Mammary epithelial cell (primary cell): ENCODE measurements at regions of chr12 and their contacts with region 1.

Region 1: DNA sequence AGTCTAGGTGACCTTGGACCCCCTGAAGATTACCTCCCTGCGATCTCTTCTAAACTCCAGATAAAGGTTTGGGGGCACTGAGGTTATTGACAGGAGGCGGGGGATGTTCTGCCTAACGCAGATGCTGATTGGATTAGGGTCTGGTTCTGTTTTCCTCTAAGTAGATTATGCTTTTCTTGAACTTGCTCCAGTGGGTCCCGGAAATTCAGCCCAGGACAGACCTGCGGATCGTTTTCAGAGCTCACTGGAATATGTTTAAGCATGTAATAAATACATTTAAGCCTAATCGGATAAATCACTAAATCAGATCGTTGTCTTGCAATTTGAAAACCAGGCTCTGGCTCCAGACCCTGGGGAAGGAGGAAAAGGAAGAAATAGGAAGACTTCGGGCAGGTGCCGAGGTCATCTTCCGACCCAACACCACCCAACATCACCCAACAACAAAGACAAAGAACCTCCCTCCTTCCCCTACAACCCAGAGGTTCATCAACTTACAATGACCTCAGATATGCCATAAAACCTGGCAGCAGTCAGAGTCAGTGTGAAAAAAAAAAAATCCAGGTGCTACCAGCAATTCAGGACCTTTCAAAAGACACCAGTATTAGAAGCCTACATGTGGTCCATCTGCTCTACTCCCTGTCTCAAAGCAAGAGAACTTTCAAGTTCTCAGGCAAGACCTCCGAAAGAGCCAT is 148.4 kb downstream of the KSR2 start:
- DNase-seq: no peak
- H3K4me3 ChIP-seq: no peak overlapping the region
- H3K27ac ChIP-seq: no peak overlapping the region
- H3K4me1 ChIP-seq: no peaks in the 10 kb centered on the region
- H3K27me3 ChIP-seq: no peaks in the 10 kb centered on the region
- CTCF ChIP-seq: no peak

Region 2: DNA sequence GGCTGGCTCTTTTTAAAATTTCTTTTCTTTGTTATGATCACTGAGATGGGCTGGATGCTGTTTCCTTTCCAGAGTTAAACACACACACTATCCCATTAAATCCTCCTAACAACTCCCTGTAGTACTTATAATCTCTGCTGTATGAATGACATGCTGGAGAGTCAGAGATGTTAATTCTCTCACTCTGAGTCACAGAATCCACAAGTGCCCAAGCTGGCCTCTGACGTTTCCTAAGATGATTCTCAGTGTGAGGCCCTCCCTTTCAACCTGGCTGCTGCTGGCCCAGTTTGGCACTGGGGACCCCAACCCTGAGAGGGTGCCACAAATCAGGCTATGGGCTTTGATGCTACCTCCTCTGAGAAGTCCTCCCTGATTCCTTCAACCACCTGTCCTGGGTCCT is 464.3 kb before region 1 on chr12:
- CTCF ChIA-PET with region 1: no interaction called
- dilution Hi-C with region 1: loop called (anchors 10 kb)
- in situ Hi-C with region 1: loop called (anchors 10 to 25 kb)
- intact Hi-C with region 1: no loop called
- DNase-seq: no peak
- H3K4me3 ChIP-seq: no peak overlapping the region
- H3K27ac ChIP-seq: no peak overlapping the region
- H3K4me1 ChIP-seq: no peaks in the 10 kb centered on the region
- H3K27me3 ChIP-seq: peaks cover 10% of the 10 kb centered on the region
- CTCF ChIP-seq: no peak

Region 3: DNA sequence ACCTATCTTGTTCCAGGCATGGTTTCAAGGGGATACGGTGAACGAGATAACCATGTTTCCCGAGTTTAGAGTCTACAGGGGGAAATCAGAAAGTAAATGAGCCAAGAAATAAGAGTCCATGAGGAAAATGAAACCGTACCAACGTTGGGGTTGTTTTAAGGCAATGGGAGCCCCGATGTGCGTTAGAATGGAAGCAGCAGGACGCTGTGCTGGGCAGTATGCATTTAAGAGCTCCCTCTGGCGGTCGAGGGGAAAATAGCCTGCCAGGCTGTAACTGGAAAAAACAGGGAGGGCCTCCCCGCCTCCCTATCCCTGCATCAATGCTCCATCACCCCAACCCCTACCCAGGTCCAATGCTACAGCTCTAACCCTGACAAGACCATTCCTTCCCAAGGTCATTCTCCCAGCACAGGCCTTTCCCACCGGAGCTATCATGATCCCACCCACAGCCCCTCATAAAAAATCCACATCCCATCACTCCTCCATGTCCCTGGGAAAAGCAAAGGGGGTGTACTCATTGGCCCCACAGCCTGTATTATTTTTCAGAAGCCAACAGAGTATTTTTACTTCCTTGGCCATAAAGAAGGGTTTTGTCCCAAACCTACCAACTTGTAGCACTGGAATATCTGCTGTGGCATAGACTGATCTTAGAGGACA is 232.6 kb before region 1 on chr12:
- CTCF ChIA-PET with region 1: no interaction called
- dilution Hi-C with region 1: no loop called
- in situ Hi-C with region 1: no loop called
- intact Hi-C with region 1: no loop called
- DNase-seq: peak; percentile 4
- H3K4me3 ChIP-seq: no peak overlapping the region
- H3K27ac ChIP-seq: no peak overlapping the region
- H3K4me1 ChIP-seq: no peaks in the 10 kb centered on the region
- H3K27me3 ChIP-seq: no peaks in the 10 kb centered on the region
- CTCF ChIP-seq: peak; percentile 64 to 79